Upper lobe of right lung (tissue), 1 donor: ENCODE measurements at regions of chr15 and their contacts with region 1.

Region 1: GRCh38 chr15:72796515-72797337 is 13.2 kb upstream of the ADPGK start:
- DNase-seq: peak; percentile 82
- ATAC-seq: peak; percentile 91
- H3K4me3 ChIP-seq: peak overlapping the region; percentile 52
- H3K27ac ChIP-seq: no peak overlapping the region
- H3K4me1 ChIP-seq: peaks cover 4% of the 10 kb centered on the region
- H3K27me3 ChIP-seq: peaks cover 7% of the 10 kb centered on the region
- CTCF ChIP-seq: peak; percentile 51

Region 2: GRCh38 chr15:73081321-73081958 is 284.7 kb after region 1 on chr15:
- intact Hi-C with region 1: loop called (anchors 5 kb)
- DNase-seq: no peak
- ATAC-seq: peak; percentile 68
- H3K4me3 ChIP-seq: no peak overlapping the region
- H3K27ac ChIP-seq: no peak overlapping the region
- H3K4me1 ChIP-seq: peaks cover 27% of the 10 kb centered on the region
- H3K27me3 ChIP-seq: peaks cover 4% of the 10 kb centered on the region
- CTCF ChIP-seq: peak; percentile 72